ENCODE measurements at regions of chr14 and their contacts with region 1.

Region 1: DNA sequence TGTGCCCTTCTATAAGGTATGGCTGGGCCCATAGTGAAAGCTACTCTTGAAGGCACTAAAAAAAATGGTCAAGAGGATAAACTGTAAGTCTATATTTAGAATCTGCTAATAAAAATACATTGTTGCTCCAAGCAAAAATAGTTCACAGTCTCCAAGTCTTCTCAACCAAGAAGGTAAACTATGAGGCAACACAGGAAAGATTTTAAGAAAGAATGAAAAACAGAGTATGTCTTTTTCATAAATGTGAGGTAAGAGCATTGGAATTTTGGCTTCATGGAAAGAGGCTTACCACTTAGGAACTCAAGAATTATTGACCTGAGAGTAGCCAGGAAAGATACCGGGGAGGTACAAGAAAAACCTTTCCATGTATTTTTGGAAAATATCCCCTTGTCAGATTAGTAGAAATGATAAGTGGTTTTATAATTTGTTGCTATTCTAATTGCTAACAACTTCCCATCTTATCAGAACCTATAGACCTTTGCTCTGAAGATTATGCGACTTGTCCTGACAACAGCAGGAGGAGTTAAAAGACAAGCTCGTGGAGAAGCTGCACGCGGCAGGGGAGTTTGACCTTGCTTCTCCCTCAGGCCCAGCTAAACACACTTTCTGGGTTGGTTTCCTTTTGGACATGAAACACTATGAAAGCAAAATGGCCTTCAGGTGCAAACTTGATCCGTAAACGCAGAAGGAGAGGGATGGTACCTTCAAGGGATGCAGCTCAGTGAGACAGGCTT is 238.1 kb downstream of the FOXN3 start:
- DNase-seq: no peak
- ATAC-seq: no peak
- H3K4me3 ChIP-seq: no peak overlapping the region
- H3K27ac ChIP-seq: no peak overlapping the region
- H3K4me1 ChIP-seq: peaks cover 32 to 46% of the 10 kb centered on the region in 2 donors
- H3K27me3 ChIP-seq: no peaks in the 10 kb centered on the region
- CTCF ChIP-seq: no peak
- POLR2A ChIP-seq: no peak

Region 2: DNA sequence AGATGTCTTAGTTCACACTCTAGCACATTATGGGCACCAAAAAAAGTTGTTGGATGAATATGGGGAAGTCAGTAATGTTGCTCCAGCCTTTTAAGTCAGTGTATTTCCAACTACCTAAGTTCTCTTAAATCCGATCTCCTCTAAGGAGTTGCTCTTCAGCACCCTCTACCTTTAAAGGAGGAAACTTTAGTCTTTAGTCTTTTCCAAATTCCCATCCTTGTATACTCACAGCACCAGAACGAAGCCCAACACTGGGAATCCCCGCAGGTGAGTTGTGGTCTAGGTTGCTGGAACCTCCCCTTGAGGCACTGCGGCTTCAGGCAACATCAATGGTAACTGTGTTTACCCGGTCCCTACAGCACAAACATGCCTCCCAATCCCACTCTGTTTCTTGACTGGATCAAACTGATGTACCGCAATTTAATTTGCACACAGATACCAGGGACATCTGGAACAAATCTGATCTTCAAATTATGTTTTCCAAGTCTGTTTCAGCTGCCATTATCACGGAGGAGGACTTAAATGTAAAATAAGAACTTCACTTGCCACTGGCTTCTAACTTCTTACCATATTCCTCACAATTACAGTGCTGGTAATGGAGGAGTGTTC is 59.1 kb after region 1 on chr14:
- in situ Hi-C with region 1: loop called in 2 of 4 experiments (anchors 5 to 10 kb)
- intact Hi-C with region 1: loop called (anchors 2 kb)
- DNase-seq: no peak
- ATAC-seq: peak in 1 of 2 donors; percentile 55
- H3K4me3 ChIP-seq: no peak overlapping the region
- H3K27ac ChIP-seq: no peak overlapping the region
- H3K4me1 ChIP-seq: peaks cover 12 to 32% of the 10 kb centered on the region in 2 donors
- H3K27me3 ChIP-seq: no peaks in the 10 kb centered on the region
- CTCF ChIP-seq: peak; percentile 13 to 53 (median 52)
- POLR2A ChIP-seq: no peak

Region 3: DNA sequence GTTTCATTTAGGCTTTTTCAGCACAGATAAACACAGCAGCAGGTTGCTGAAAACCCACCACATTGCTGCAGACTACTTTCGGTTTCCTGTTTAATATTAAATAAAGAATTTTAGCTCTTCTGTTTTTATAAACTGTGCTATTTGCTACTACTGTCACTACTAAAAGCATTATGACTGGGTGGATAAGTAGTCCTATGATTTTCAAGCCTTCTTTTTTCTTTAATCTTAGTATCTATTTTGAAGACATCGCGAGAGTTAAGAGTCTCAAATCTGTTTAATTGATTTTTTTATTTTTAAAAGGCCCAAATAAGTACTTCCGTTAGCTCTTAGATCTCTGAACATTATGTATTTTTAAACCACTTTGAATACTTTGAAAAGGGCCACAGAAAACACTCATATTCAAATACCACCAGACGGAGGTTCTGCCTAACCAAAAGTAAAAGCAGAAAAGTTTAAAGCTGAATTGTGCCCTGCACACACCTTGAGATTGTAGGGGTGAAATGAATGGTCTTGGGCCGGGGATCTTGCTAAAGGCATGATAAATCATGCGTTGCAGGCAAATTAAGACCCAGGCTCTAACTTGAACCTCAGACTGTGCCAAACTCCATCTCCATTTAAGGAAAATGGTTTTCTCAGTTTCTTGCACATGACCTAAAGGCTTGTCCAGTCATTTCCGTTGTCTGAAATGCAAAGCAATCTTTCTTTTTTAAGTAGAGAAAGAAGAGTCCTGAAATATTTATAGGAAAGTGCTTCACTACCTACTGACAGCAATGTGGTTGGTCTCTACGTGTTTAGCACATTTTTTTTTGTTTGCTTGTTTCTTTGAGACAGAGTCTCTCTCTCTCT is 251.6 kb after region 1 on chr14:
- in situ Hi-C with region 1: loop called in 1 of 4 experiments (anchors 10 kb)
- intact Hi-C with region 1: no loop called
- DNase-seq: no peak
- ATAC-seq: no peak
- H3K4me3 ChIP-seq: peak overlapping the region; percentile 14 to 43 (median 34)
- H3K27ac ChIP-seq: peak overlapping the region; percentile 71 to 79 (median 74)
- H3K4me1 ChIP-seq: peaks cover 48 to 56% of the 10 kb centered on the region in 2 donors
- H3K27me3 ChIP-seq: no peaks in the 10 kb centered on the region
- CTCF ChIP-seq: no peak
- POLR2A ChIP-seq: peak in 1 of 2 donors; percentile 10

Region 4: GRCh38 chr14:89440986-89441909 is 262.3 kb after region 1 on chr14:
- in situ Hi-C with region 1: no loop called
- intact Hi-C with region 1: no loop called
- DNase-seq: no peak
- ATAC-seq: no peak
- H3K4me3 ChIP-seq: no peak overlapping the region
- H3K27ac ChIP-seq: no peak overlapping the region
- H3K4me1 ChIP-seq: peaks cover 7 to 10% of the 10 kb centered on the region in 2 donors
- H3K27me3 ChIP-seq: no peaks in the 10 kb centered on the region
- CTCF ChIP-seq: no peak
- POLR2A ChIP-seq: no peak